HCT116 (cell line): ENCODE measurements at regions of chr11 and their contacts with region 1.

Region 1: GRCh38 chr11:66311965-66312548 is 4.8 kb downstream of the CD248 start:
- DNase-seq: peak; percentile 95
- ATAC-seq: peak; percentile 84
- H3K4me3 ChIP-seq: peak overlapping the region; percentile 41 to 57
- H3K27ac ChIP-seq: peak overlapping the region; percentile 72
- H3K4me1 ChIP-seq: peaks cover 16 to 37% of the 10 kb centered on the region in 2 experiments
- H3K27me3 ChIP-seq: no peaks in the 10 kb centered on the region
- CTCF ChIP-seq: peak; percentile 77 to 97 (median 94); a peak in 5 of 6 replicates
- POLR2A ChIP-seq: peak; percentile 32
- RAD21 ChIP-seq: peak; percentile 100

Region 2: GRCh38 chr11:66183494-66184048 is 128.5 kb before region 1 on chr11:
- CTCF ChIA-PET with region 1: no interaction called
- POLR2A ChIA-PET with region 1: no interaction called
- RAD21 ChIA-PET with region 1: no interaction called
- intact Hi-C with region 1: no loop called
- DNase-seq: no peak
- ATAC-seq: peak; percentile 25; the same call in 1 of the 2 replicates
- H3K4me3 ChIP-seq: no peak overlapping the region
- H3K27ac ChIP-seq: no peak overlapping the region
- H3K4me1 ChIP-seq: peaks cover 0 to 5% of the 10 kb centered on the region in 2 experiments; a peak in 2 of 4 replicates
- H3K27me3 ChIP-seq: no peaks in the 10 kb centered on the region
- CTCF ChIP-seq: no peak
- POLR2A ChIP-seq: no peak
- RAD21 ChIP-seq: no peak

Region 3: DNA sequence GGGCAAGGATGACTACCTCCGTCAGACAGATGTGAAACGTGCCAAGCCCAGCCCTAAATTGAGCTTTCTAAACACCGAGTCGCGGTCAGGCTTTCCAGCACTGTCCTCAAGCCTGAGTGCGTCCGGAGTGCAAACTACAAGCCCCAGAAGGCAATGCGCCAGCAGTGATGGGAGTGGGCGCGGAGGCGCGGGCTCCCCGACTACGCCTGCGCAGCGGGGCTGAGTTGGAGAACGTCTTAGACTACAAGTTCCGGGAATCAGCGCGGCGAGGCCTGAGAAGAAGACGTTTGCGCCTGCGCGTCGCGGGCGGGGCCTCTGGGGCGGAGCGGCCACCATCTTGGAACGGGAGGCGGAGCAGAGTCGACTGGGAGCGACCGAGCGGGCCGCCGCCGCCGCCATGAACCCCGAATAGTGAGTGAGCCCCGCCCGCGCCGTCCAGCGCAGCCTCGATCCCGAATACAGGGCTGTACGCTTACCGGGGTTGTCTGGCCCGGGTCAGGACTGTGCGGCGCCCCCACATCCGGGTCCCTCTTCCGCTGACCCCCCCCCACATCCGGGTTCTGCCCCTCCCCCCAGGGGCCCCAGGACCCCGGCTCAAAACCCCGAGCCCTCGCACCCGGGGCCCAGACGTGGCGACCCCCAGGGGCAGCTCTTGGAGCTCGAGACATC is 43.6 kb before region 1 on chr11 and contains the start of gene RAB1B:
- CTCF ChIA-PET with region 1: interaction called, 9 read pairs
- POLR2A ChIA-PET with region 1: interaction called, 18 read pairs
- RAD21 ChIA-PET with region 1: no interaction called
- intact Hi-C with region 1: no loop called
- DNase-seq: peak; percentile 99
- ATAC-seq: peak; percentile 85
- H3K4me3 ChIP-seq: peak within 1 kb of the TSS; percentile 93 to 99
- H3K27ac ChIP-seq: peak within 1 kb of the TSS; percentile 69
- H3K4me1 ChIP-seq: peaks cover 6 to 26% of the 10 kb centered on the region in 2 experiments
- H3K27me3 ChIP-seq: no peaks in the 10 kb centered on the region
- CTCF ChIP-seq: no peak
- POLR2A ChIP-seq: peak; percentile 38
- RAD21 ChIP-seq: no peak
- total RNA-seq, gene RAB1B: 148 TPM

Region 4: DNA sequence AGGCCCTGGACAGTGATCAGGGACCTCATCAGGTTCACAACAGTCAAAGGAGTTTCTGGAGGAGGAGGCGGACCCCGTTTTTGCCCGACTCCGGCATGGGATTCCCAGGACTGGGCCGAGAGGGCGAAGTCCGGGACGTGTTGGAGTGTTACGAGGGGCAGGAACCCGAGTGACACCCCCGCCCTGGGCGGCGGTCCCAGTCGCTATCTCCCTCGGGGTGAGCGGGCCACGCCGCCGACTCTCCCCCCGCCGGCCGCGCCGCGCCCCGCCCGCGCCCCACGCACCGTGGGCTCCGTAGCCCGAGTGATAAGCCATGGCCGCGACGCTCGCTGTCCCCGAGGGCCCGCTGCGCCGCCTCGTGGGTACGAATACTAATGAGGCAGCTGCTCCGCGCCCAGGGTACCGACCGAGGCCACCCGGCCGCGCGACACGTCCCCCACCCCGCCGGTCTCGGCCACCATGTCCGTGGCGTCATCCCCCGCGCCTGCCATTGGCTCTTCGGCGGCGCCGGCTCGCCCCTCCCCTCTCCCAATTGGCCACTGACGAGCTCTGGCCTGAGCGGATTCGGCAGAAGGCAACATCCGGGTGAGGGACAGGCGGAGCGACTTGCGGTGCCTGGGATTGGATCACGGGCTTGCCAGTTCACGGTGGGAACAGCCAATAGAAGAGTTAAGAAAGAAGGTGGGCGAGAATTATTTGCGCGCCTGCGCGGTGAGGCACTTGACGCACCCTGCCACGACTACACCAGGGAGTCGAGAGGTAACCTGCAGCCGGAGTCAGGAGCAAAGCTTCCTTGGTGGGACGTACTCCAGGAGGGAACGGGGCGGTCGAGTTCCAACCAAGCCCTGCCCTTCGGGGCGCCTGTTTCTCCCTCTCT is 23.1 kb before region 1 on chr11 and contains the start of gene YIF1A:
- CTCF ChIA-PET with region 1: interaction called, 25 read pairs
- POLR2A ChIA-PET with region 1: interaction called, 18 read pairs
- RAD21 ChIA-PET with region 1: no interaction called
- intact Hi-C with region 1: loop called (anchors 1 kb)
- DNase-seq: peak; percentile 99
- ATAC-seq: peak; percentile 94
- H3K4me3 ChIP-seq: peak within 1 kb of the TSS; percentile 71 to 96
- H3K27ac ChIP-seq: peak within 1 kb of the TSS; percentile 76
- H3K4me1 ChIP-seq: peaks cover 22 to 45% of the 10 kb centered on the region in 2 experiments
- H3K27me3 ChIP-seq: no peaks in the 10 kb centered on the region
- CTCF ChIP-seq: no peak
- POLR2A ChIP-seq: peak; percentile 38
- RAD21 ChIP-seq: no peak
- total RNA-seq, gene YIF1A: 54.7 TPM

Region 5: GRCh38 chr11:66328307-66329144 is 16.5 kb after region 1 on chr11:
- CTCF ChIA-PET with region 1: interaction called, 42 read pairs
- POLR2A ChIA-PET with region 1: interaction called, 4 read pairs
- RAD21 ChIA-PET with region 1: interaction called in 1 of 2 experiments, 6 read pairs
- intact Hi-C with region 1: loop called (anchors 1 kb)
- DNase-seq: peak; percentile 54
- ATAC-seq: peak; percentile 86
- H3K4me3 ChIP-seq: peak overlapping the region in 1 of 2 experiments; percentile 21; a peak in 1 of 4 replicates
- H3K27ac ChIP-seq: peak overlapping the region; percentile 41
- H3K4me1 ChIP-seq: peaks cover 17 to 57% of the 10 kb centered on the region in 2 experiments
- H3K27me3 ChIP-seq: no peaks in the 10 kb centered on the region
- CTCF ChIP-seq: peak in 2 of 3 experiments; percentile 92 to 97; a peak in 4 of 6 replicates
- POLR2A ChIP-seq: no peak
- RAD21 ChIP-seq: no peak

Region 6: GRCh38 chr11:66363805-66364535 is 51.9 kb after region 1 on chr11:
- CTCF ChIA-PET with region 1: interaction called, 10 read pairs
- POLR2A ChIA-PET with region 1: no interaction called
- RAD21 ChIA-PET with region 1: no interaction called
- intact Hi-C with region 1: no loop called
- DNase-seq: no peak
- ATAC-seq: peak; percentile 75
- H3K4me3 ChIP-seq: no peak overlapping the region
- H3K27ac ChIP-seq: no peak overlapping the region
- H3K4me1 ChIP-seq: peaks cover 0 to 7% of the 10 kb centered on the region in 2 experiments; a peak in 1 of 4 replicates
- H3K27me3 ChIP-seq: no peaks in the 10 kb centered on the region
- CTCF ChIP-seq: peak in 2 of 3 experiments; percentile 91 to 95; a peak in 5 of 6 replicates
- POLR2A ChIP-seq: no peak
- RAD21 ChIP-seq: no peak

Region 7: GRCh38 chr11:66386171-66387069 is 74.4 kb after region 1 on chr11:
- CTCF ChIA-PET with region 1: interaction called, 121 read pairs
- POLR2A ChIA-PET with region 1: interaction called, 7 read pairs
- RAD21 ChIA-PET with region 1: interaction called, 3 to 6 read pairs
- intact Hi-C with region 1: loop called (anchors 5 kb)
- DNase-seq: peak; percentile 84
- ATAC-seq: peak; percentile 71
- H3K4me3 ChIP-seq: peak overlapping the region; percentile 27 to 32
- H3K27ac ChIP-seq: 0 out of 2 replicates have a peak overlapping the region, but pooled peaks have one; percentile 3
- H3K4me1 ChIP-seq: peaks cover 16 to 32% of the 10 kb centered on the region in 2 experiments; a peak in 3 of 4 replicates
- H3K27me3 ChIP-seq: no peaks in the 10 kb centered on the region
- CTCF ChIP-seq: peak; percentile 79 to 96 (median 94)
- POLR2A ChIP-seq: no peak
- RAD21 ChIP-seq: peak; percentile 71

Region 8: GRCh38 chr11:66677599-66678375 is 365.7 kb after region 1 on chr11 and contains the start of gene RBM4B:
- CTCF ChIA-PET with region 1: interaction called, 13 read pairs
- POLR2A ChIA-PET with region 1: interaction called, 7 read pairs
- RAD21 ChIA-PET with region 1: no interaction called
- intact Hi-C with region 1: no loop called
- DNase-seq: peak; percentile 84
- ATAC-seq: peak; percentile 94
- H3K4me3 ChIP-seq: peak within 1 kb of the TSS; percentile 68 to 70
- H3K27ac ChIP-seq: peak within 1 kb of the TSS; percentile 82
- H3K4me1 ChIP-seq: peaks cover 3 to 24% of the 10 kb centered on the region in 2 experiments; a peak in 3 of 4 replicates
- H3K27me3 ChIP-seq: no peaks in the 10 kb centered on the region
- CTCF ChIP-seq: no peak
- POLR2A ChIP-seq: peak; percentile 66
- RAD21 ChIP-seq: no peak
- total RNA-seq, gene RBM4B: 18.1 TPM

Region 9: DNA sequence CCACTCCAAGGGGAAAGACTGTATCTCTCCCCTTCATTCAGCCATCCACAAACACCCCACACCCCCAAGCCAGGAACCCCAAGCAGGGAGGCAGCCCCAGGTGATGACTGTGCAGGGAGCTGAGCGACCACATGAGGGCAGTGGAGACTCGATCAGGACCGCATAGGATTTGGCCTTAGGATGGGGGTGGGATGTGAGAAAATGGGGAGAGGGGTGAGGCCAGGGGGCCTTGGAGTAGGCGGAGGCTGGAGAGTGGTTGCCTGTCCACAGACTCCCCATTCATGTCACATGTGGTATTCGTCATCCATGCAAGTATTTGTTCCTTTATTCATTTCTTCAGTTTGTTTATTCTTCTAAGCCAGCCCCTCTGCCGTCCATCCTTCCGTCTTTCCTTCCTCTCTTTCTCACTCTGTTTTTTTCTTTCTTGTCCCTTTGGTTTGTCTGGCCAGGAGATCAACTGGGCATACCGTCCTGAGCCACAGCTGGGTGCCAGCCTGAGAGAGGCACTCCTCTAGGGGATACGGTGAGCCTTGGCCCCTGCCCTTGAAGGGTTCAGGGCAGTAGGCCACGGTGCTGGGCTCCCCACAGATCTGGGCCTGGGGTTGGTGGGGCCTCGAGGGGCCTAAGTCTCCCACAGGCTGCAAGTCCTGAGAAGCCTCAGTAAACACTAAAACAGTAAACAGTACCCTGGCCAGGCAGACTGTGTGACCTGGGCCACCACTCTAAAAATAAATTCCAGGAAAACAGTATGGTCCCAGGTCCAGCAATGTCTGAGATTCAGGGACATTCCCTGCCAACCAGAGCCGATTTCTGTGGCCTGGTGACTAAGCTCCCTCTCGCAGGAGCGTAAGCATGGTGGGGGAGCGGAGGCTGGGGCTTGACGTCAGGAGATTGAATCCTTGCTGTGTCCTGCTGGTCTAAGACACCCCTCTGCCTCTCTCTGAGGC is 742.1 kb after region 1 on chr11:
- CTCF ChIA-PET with region 1: no interaction called
- POLR2A ChIA-PET with region 1: no interaction called
- RAD21 ChIA-PET with region 1: no interaction called
- intact Hi-C with region 1: no loop called
- DNase-seq: no peak
- ATAC-seq: peak; percentile 65
- H3K4me3 ChIP-seq: no peak overlapping the region
- H3K27ac ChIP-seq: peak overlapping the region; percentile 47
- H3K4me1 ChIP-seq: peaks cover 24 to 50% of the 10 kb centered on the region in 2 experiments
- H3K27me3 ChIP-seq: no peaks in the 10 kb centered on the region
- CTCF ChIP-seq: peak in 2 of 3 experiments; percentile 89; a peak in 4 of 6 replicates
- POLR2A ChIP-seq: no peak
- RAD21 ChIP-seq: no peak

Region 10: GRCh38 chr11:67391304-67392132 is 1079.5 kb after region 1 on chr11 and contains the start of gene RAD9A:
- CTCF ChIA-PET with region 1: no interaction called
- POLR2A ChIA-PET with region 1: no interaction called
- RAD21 ChIA-PET with region 1: no interaction called
- intact Hi-C with region 1: no loop called
- DNase-seq: peak; percentile 86
- ATAC-seq: peak; percentile 71
- H3K4me3 ChIP-seq: peak within 1 kb of the TSS; percentile 69
- H3K27ac ChIP-seq: peak within 1 kb of the TSS; percentile 85
- H3K4me1 ChIP-seq: peaks cover 9 to 34% of the 10 kb centered on the region in 2 experiments
- H3K27me3 ChIP-seq: no peaks in the 10 kb centered on the region
- CTCF ChIP-seq: no peak
- POLR2A ChIP-seq: no peak
- RAD21 ChIP-seq: no peak
- total RNA-seq, gene RAD9A: 49.8 TPM